Testis (tissue), 5 donors: ENCODE measurements at regions of chr13 and their contacts with region 1.

Region 1: DNA sequence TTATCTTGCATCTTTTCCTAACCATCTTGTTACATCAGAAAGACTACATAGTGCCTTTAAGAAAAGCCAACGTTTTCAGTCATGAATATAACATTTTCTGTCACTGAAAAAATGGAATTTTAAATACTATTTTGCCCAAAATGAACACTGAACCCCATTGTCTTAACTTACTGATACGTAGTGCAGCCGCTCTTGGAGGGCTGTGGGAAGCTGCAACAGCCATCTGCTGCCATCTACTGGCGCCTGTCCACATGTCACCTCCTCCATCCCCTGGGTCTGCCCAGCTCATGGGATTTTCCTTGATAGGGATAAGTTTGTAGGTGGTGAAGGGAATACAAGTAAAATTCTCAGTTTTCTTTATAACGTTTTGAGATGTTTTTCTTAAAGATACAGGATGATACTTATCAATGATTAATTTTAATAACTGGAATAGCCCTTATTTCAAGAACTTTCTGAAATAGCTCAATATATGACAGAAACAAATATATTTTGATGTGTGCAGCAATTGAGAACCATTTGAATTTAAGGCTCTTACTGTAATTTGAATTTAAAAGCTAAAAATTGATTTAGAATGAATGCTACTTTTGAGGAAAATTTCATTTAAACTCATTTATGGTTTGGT is 73.7 kb downstream of the GGACT start:
- DNase-seq: peak; percentile 90
- H3K4me3 ChIP-seq: no peak overlapping the region
- H3K27ac ChIP-seq: no peak overlapping the region
- H3K4me1 ChIP-seq: no peaks in the 10 kb centered on the region
- H3K27me3 ChIP-seq: no peaks in the 10 kb centered on the region
- CTCF ChIP-seq: peak; percentile 56 to 74 (median 63)
- POLR2A ChIP-seq: no peak

Region 2: GRCh38 chr13:99656092-99656745 is 858.7 kb before region 1 on chr13:
- intact Hi-C with region 1: loop called (anchors 10 kb)
- DNase-seq: peak; percentile 92
- H3K4me3 ChIP-seq: no peak overlapping the region
- H3K27ac ChIP-seq: no peak overlapping the region
- H3K4me1 ChIP-seq: peaks cover 4% of the 10 kb centered on the region
- H3K27me3 ChIP-seq: no peaks in the 10 kb centered on the region
- CTCF ChIP-seq: peak; percentile 82 to 92 (median 84)
- POLR2A ChIP-seq: no peak

Region 3: DNA sequence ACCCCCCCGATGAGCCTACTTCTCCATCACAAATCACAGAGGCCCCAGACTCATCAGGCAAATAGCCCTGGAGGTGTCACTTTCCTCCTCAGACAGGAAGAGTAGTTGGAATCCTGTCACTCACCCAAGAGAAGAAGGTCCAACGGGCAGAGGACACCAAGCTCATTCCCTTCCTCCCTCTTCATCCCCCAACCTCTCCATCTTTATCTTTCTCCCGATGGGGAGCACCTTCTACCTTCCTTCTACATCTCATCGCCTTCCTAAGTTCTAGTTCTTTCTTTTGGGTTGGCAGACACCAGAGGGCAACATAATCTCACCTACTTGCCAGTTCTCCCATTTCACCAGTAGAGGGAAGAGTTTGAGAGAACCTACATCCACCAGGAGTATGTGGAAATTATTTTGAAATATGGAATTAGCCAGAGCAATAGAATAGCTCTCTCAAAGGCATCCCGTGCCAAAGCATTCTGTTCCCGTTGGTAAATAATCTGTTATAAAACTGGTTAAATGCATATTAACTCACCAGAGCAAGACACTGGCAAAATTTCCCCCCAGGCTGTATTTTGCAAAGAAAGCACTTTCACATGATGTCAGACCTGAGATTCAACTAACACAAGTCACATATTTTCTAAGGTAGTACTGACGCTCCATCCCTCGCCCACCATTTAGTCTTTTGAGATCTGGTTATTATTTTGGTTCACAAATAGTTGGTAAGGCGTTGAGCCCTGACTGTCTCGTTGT is 598.4 kb before region 1 on chr13:
- intact Hi-C with region 1: loop called (anchors 10 kb)
- DNase-seq: no peak
- H3K4me3 ChIP-seq: no peak overlapping the region
- H3K27ac ChIP-seq: no peak overlapping the region
- H3K4me1 ChIP-seq: no peaks in the 10 kb centered on the region
- H3K27me3 ChIP-seq: no peaks in the 10 kb centered on the region
- CTCF ChIP-seq: peak; percentile 65 to 74 (median 73)
- POLR2A ChIP-seq: no peak